Colonic mucosa (tissue), 4 donors: ENCODE measurements at regions of chr2 and their contacts with region 1.

Region 1: DNA sequence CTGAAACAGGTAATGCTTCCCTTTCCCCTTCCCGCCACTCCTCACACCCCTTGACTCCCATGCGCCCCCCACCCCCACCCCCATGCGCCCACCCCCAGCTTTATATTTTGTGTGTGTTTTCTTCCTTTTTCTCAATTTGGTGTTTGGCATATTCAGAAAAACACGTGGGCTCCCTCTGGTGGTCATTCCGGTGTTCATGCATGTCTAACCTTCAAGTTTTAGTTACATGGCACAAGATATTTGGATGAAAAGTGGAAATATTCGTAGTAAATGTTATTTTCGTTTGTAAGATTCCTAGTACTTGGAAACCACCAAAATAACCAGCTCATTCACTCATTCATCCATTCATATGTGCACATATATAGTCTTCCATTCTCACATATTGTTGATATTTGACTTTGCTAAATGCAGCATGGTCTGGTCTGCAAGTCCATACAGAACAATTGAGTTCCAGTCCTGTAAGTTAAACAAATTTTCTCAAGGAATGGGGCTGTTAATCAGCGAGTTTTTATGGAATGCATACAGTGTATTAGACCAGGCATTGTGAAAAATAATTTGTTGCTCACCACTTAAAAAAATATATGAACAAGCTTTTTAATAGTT is 143.6 kb upstream of the MAP3K20 start:
- DNase-seq: peak; percentile 63
- H3K4me3 ChIP-seq: no peak overlapping the region
- H3K27ac ChIP-seq: no peak overlapping the region
- H3K4me1 ChIP-seq: no peaks in the 10 kb centered on the region
- H3K27me3 ChIP-seq: no peaks in the 10 kb centered on the region
- CTCF ChIP-seq: peak; percentile 57

Region 2: DNA sequence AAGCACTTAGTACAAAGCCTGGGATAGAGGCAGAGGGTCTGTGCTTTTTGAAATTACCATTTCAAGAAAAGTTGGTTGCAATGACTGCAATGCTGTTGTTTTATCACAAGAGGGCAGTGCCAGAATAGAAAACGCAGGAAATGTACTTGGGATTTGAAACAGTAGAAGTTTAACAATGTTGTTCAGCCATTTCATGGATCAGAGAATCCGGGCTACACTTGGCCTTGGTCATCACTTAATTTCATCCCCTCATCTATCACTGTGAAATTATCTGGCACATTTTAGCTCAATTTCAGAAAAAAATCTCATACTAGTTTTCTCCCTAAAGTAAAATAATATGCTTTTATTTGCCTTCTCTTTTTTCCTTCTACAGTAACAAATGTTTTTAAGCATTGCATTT is 125.5 kb before region 1 on chr2:
- intact Hi-C with region 1: loop called (anchors 5 kb)
- DNase-seq: no peak
- H3K4me3 ChIP-seq: no peak overlapping the region
- H3K27ac ChIP-seq: no peak overlapping the region
- H3K4me1 ChIP-seq: no peaks in the 10 kb centered on the region
- H3K27me3 ChIP-seq: no peaks in the 10 kb centered on the region
- CTCF ChIP-seq: peak; percentile 82

Region 3: GRCh38 chr2:172864182-172864581 is 67.8 kb before region 1 on chr2:
- intact Hi-C with region 1: loop called (anchors 2 kb)
- DNase-seq: peak; percentile 54
- H3K4me3 ChIP-seq: no peak overlapping the region
- H3K27ac ChIP-seq: no peak overlapping the region
- H3K4me1 ChIP-seq: no peaks in the 10 kb centered on the region
- H3K27me3 ChIP-seq: peaks cover 14% of the 10 kb centered on the region
- CTCF ChIP-seq: peak; percentile 65